Activated CD4-positive, alpha-beta T cell treated with anti-CD3 and anti-CD28 coated beads for 36 hours (primary cell): ENCODE measurements at regions of chr3 and their contacts with region 1.

Region 1: GRCh38 chr3:39383045-39383880 is at the start of gene SLC25A38:
- DNase-seq: peak; percentile 91
- ATAC-seq: peak; percentile 88
- H3K4me3 Mint-ChIP-seq: peak within 1 kb of the TSS; percentile 97
- H3K27ac Mint-ChIP-seq: peak within 1 kb of the TSS; percentile 97
- H3K4me1 Mint-ChIP-seq: peaks cover 43% of the 10 kb centered on the region
- H3K27me3 Mint-ChIP-seq: no peaks in the 10 kb centered on the region
- total RNA-seq, gene SLC25A38: 23.0 to 24.8 TPM

Region 2: DNA sequence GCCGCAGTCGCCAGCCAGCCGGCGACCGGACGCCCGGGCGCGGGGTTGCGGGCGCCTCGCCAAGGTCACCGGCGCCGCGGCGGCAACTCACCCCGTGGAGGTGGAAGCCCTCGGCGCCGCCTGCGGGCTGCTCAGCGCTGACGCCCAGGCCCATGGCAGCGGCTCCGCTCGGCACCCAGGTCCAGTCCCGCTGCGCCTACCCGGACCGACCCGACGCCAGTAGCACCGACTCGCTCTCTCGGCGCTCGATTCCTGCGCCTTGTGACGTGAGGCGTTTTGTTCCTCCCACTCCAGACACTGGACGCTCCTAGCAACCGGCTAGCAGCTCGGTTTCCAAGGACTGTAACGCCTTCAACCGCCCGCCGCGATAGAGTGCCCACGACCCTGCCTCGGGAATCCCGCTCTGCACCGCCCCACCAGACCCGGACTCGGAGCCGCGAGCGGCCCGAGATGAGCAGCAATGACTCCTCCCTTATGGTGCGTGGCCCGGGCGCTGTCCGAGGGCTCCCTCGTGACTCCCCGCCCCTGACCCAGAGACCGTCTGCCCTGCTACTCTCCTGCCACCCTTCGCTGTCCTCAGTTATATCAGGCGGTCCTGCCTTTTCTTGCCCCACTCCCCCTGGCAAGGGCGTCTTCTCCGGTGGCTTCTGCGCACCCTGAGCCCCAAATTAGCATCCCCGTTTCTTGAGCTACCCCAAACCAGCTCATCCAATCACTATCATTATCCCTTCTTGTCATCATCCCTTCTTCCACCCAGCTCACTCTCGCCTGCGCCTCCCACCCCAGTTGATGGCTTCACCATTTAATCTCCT is 275.7 kb before region 1 on chr3 and contains the starts of genes GORASP1 and TTC21A:
- CTCF ChIA-PET with region 1: no interaction called
- POLR2A ChIA-PET with region 1: no interaction called
- intact Hi-C with region 1: loop called (anchors 1 to 10 kb)
- DNase-seq: peak; percentile 80
- ATAC-seq: peak; percentile 70
- H3K4me3 Mint-ChIP-seq: peak within 1 kb of the TSS; percentile 83
- H3K27ac Mint-ChIP-seq: peak within 1 kb of the TSS; percentile 77
- H3K4me1 Mint-ChIP-seq: peaks cover 36% of the 10 kb centered on the region
- H3K27me3 Mint-ChIP-seq: no peaks in the 10 kb centered on the region
- total RNA-seq, gene GORASP1: 23.0 to 23.8 TPM
- total RNA-seq, gene TTC21A: 1.8 to 2.3 TPM

Region 3: DNA sequence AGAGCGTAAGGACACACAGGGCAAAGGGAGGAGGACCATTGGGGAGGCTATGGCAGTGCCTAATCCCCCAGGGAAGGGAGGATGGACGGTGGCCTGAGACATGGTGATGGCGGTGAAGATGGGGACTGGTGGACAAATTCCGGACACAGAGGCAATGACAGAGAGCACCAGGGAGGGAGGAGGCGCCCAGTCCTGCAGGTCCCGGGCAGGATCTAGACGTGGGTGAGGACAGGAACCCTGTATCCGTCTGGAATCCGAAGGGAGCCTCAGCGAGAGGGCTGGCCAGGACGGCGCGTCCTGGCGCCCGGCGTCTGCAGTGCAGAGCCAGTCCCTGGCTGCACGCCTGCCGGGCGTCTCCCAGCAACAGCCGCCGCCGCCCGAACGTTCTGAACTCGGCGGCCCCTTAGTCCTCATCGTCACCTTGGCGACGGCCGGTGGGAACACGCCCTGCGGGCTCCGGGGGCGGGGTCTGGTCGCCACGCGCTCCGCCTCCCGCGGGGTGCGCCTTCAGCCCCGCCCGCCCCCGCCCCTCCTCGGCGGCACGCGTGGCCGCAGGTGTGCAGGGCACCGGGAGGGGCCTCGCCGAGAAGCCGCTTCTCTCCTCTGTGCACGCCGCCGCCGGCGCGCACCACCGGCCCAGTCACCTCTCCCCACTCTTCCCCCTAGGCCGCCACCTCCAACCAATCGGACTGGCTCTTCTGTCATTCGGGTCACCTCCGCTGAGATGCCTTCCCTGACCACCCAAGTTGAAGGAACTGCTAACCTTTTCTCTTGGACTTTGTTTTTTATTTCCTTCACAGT is 202.5 kb before region 1 on chr3:
- CTCF ChIA-PET with region 1: no interaction called
- POLR2A ChIA-PET with region 1: no interaction called
- intact Hi-C with region 1: loop called in 1 of 2 experiments (anchors 1 kb)
- DNase-seq: peak; percentile 94
- ATAC-seq: peak; percentile 77
- H3K4me3 Mint-ChIP-seq: peak overlapping the region; percentile 77
- H3K27ac Mint-ChIP-seq: peak overlapping the region; percentile 82
- H3K4me1 Mint-ChIP-seq: peaks cover 48% of the 10 kb centered on the region
- H3K27me3 Mint-ChIP-seq: no peaks in the 10 kb centered on the region

Region 4: DNA sequence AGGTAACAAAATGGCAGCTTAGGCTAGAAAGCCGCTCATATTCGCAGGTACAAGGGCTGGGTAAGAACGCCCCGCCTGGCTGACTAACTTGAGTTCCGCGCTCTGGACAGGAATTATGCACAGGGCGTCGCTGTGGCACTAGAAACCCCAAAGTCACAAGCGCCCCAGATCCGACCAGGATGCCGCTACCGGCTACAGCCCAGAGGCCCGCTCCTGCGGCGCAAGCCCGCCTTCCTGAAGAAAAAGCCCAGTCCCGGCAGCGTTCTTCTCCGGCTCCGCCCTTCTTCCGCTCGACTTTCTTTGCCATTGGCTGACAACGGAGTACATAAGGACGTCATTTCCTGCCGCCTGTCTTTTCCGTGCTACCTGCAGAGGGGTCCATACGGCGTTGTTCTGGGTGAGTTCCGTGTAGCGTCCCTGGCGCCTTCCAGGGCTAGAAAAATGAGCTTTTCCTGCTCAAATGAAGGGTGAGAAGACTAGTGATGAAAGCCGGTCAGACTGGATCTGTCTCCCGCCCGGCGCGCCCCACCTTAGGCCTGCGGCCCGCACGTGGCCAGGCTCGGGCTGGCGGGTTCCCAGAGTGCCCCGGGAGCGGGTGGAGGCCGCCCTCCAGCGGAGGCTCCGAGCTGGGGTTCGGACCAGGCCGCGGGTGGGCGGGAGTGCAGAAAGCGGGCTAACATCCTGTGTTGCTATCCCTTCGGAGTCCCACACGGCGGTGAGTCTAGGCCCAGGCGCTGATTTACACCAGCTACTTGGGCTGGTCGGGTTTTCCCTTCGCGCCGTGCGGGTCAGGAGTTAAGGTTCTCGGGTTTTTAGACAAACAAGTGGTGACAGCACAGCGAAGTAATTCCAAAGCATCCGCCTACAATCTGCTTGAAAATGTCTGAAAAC is 23.4 kb after region 1 on chr3 and contains the start of gene RPSA:
- CTCF ChIA-PET with region 1: interaction called, 6 read pairs
- POLR2A ChIA-PET with region 1: interaction called, 6 read pairs
- intact Hi-C with region 1: loop called (anchors 1 kb)
- DNase-seq: peak; percentile 98
- ATAC-seq: peak; percentile 93
- H3K4me3 Mint-ChIP-seq: peak within 1 kb of the TSS; percentile 98
- H3K27ac Mint-ChIP-seq: peak within 1 kb of the TSS; percentile 98
- H3K4me1 Mint-ChIP-seq: peaks cover 39% of the 10 kb centered on the region
- H3K27me3 Mint-ChIP-seq: no peaks in the 10 kb centered on the region
- total RNA-seq, gene RPSA: 2,498 to 3,023 TPM